ENCODE measurements at regions of chr9 and their contacts with region 1.

Region 1: DNA sequence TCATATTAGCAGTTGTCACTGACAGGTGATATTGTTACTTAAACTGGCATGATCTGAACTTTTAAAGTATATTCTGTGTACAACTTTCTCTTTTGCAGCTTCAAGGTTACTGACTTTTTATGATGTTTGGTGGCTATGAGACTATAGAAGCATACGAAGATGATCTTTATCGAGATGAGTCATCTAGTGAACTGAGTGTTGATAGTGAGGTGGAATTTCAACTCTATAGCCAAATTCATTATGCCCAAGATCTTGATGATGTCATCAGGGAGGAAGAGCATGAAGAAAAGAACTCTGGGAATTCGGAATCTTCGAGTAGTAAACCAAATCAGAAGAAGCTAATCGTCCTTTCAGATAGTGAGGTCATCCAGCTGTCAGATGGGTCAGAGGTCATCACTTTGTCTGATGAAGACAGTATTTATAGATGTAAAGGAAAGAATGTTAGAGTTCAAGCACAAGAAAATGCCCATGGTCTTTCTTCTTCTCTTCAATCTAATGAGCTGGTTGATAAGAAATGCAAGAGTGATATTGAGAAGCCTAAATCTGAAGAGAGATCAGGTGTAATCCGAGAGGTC is 5.9 kb downstream of the ZCCHC7 start:
- DNase-seq: no peak
- H3K4me3 ChIP-seq: no peak overlapping the region
- H3K27ac ChIP-seq: no peak overlapping the region
- H3K4me1 ChIP-seq: 0 out of 2 replicates have a peak, but pooled peaks cover 9% of the 10 kb centered on the region
- H3K27me3 ChIP-seq: no peaks in the 10 kb centered on the region
- CTCF ChIP-seq: no peak

Region 2: DNA sequence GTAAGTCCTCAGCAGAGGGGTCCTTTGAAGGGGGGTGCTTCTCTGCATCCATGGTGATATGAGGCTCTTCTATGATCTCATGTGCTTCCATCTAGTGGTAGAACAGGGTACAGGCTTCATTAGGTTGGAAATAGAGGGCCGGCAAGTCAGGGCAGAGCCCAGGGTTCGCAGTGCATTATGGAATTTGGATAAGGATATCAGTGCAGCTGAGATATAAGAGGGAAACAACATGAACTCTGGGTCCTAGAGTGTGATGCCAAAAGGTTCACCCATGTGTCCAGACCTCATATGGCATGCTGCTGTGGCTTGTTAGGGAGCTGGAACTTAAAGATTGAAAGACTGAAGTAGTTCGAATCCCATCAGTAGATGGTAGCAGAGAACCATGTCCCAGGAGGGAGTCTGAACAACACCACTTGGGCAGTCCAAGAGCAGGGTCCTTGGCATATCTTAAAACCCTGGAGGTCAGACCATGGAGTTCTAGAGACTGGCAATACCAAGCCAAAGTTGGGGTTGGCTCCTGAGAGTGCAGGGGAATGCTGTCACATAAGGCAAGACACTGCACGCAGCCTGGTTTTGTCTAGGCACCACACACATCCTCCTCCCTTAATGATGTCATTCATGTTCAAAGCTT is 1300.1 kb before region 1 on chr9:
- CTCF ChIA-PET with region 1: no interaction called
- POLR2A ChIA-PET with region 1: no interaction called
- intact Hi-C with region 1: no loop called
- DNase-seq: no peak
- H3K4me3 ChIP-seq: no peak overlapping the region
- H3K27ac ChIP-seq: no peak overlapping the region
- H3K4me1 ChIP-seq: no peaks in the 10 kb centered on the region
- H3K27me3 ChIP-seq: no peaks in the 10 kb centered on the region
- CTCF ChIP-seq: peak; percentile 74

Region 3: DNA sequence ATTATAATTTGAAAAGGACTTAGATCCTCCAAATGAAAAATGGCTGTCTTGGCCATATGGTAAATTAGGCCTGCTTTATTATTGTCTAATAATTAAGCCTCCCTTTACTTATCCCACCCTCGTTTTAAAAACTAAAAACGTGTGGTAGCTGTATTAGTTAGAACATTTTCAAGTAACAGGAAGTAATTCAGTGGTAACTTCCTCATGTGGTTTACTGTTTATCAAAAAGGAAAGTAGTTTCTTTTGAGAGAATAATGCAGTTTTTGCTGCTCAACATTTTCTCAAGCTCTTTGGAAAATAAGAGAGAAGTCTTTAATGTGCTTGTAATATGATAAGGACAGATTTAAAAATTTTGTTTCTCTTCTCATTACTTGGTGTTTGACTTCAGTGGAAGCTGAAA is 20.1 kb after region 1 on chr9:
- CTCF ChIA-PET with region 1: no interaction called
- POLR2A ChIA-PET with region 1: interaction called, 24 read pairs
- intact Hi-C with region 1: no loop called
- DNase-seq: no peak
- H3K4me3 ChIP-seq: no peak overlapping the region
- H3K27ac ChIP-seq: no peak overlapping the region
- H3K4me1 ChIP-seq: no peaks in the 10 kb centered on the region
- H3K27me3 ChIP-seq: no peaks in the 10 kb centered on the region
- CTCF ChIP-seq: no peak

Region 4: GRCh38 chr9:37309136-37309535 is 182.8 kb after region 1 on chr9:
- CTCF ChIA-PET with region 1: no interaction called
- POLR2A ChIA-PET with region 1: no interaction called
- intact Hi-C with region 1: no loop called
- DNase-seq: no peak
- H3K4me3 ChIP-seq: no peak overlapping the region
- H3K27ac ChIP-seq: no peak overlapping the region
- H3K4me1 ChIP-seq: no peaks in the 10 kb centered on the region
- H3K27me3 ChIP-seq: no peaks in the 10 kb centered on the region
- CTCF ChIP-seq: no peak

Region 5: GRCh38 chr9:37840560-37841194 is 714.4 kb after region 1 on chr9:
- CTCF ChIA-PET with region 1: interaction called, 16 read pairs
- POLR2A ChIA-PET with region 1: no interaction called
- intact Hi-C with region 1: no loop called
- DNase-seq: peak; percentile 14 to 36
- H3K4me3 ChIP-seq: no peak overlapping the region
- H3K27ac ChIP-seq: no peak overlapping the region
- H3K4me1 ChIP-seq: peaks cover 5% of the 10 kb centered on the region; the same call in 1 of the 2 replicates
- H3K27me3 ChIP-seq: no peaks in the 10 kb centered on the region
- CTCF ChIP-seq: no peak